ENCODE measurements at regions of chr10 and their contacts with region 1.

Region 1: DNA sequence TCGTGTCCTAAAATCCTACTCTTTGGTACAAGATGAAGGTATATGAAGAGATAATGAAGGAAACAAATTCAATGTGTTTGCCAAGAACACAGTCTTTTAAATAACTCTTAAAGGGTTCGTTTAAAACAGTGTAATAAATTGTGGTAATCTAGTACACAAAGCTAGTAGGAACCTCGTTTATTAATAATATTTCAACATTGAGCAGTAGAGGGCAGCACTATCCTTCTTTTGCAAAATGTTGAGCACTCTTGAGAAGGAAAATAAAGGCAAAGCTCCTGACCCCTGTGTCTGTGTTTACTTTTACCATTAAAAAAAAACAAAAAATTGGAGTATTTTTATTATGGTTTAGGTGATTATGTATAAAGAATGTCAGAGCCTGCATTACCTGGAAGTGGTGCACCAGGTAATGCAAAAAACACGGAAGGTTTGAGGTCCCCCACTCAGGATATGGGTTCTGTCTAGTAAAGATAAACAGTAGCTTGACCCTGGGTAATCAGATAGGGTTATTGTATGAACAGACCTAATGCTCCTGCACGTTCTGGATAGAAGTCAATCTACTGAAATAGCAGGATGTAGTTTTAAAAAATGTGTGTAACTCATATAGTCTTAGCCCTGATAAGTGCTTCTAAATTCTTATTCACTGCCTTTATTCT is 5.7 kb upstream of the GOT1 start:
- DNase-seq: peak in 1 of 2 experiments; percentile 51
- ATAC-seq: peak; percentile 60 to 80; a peak in 5 of 6 replicates
- H3K4me3 ChIP-seq: no peak overlapping the region
- H3K27ac ChIP-seq: no peak overlapping the region
- H3K4me1 ChIP-seq: peaks cover 4% of the 10 kb centered on the region; the same call in 1 of the 3 replicates
- CTCF ChIP-seq: peak; percentile 85
- EP300 ChIP-seq: no peak
- POLR2A ChIP-seq: no peak
- RAD21 ChIP-seq: peak; percentile 71 to 74

Region 2: GRCh38 chr10:99346247-99346646 is 89.9 kb before region 1 on chr10:
- CTCF ChIA-PET with region 1: no interaction called
- POLR2A ChIA-PET with region 1: no interaction called
- DNase-seq: peak in 1 of 2 experiments; percentile 53
- ATAC-seq: 0 out of 6 replicates have a peak, but pooled peaks of 1 of the 2 experiments have one; percentile 5
- H3K4me3 ChIP-seq: no peak overlapping the region
- H3K27ac ChIP-seq: peak overlapping the region; percentile 70 to 79
- H3K4me1 ChIP-seq: peaks cover 54% of the 10 kb centered on the region
- CTCF ChIP-seq: no peak
- EP300 ChIP-seq: no peak
- POLR2A ChIP-seq: no peak
- RAD21 ChIP-seq: no peak

Region 3: GRCh38 chr10:99394761-99395386 is 41.2 kb before region 1 on chr10:
- CTCF ChIA-PET with region 1: interaction called, 13 read pairs
- POLR2A ChIA-PET with region 1: no interaction called
- DNase-seq: no peak
- ATAC-seq: no peak
- H3K4me3 ChIP-seq: no peak overlapping the region
- H3K27ac ChIP-seq: no peak overlapping the region
- H3K4me1 ChIP-seq: peaks cover 5% of the 10 kb centered on the region; the same call in 1 of the 3 replicates
- CTCF ChIP-seq: no peak
- EP300 ChIP-seq: no peak
- POLR2A ChIP-seq: no peak
- RAD21 ChIP-seq: no peak

Region 4: DNA sequence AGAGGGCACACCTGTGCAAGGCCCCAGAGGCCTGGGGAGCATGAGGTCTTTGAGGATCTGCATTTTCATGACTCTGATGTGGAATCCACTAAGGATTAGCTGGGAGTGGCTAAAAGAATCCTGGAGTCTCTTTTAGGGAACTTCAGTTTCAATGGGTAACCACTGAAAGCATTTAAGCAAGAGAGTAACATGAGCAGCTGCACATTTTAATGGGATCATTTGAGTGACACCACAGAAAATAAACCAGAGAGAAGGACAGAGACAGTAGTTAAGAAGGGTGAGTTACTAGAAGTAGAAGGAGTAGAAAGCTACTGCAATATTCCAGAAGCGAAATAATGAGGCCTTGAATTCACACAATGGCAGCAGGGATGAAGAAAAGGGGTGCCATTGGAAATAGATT is 10.9 kb before region 1 on chr10:
- CTCF ChIA-PET with region 1: interaction called, 17 read pairs
- POLR2A ChIA-PET with region 1: interaction called, 4 read pairs
- DNase-seq: no peak
- ATAC-seq: no peak
- H3K4me3 ChIP-seq: no peak overlapping the region
- H3K27ac ChIP-seq: no peak overlapping the region
- H3K4me1 ChIP-seq: peaks cover 14% of the 10 kb centered on the region; the same call in 2 of the 3 replicates
- CTCF ChIP-seq: no peak
- EP300 ChIP-seq: no peak
- POLR2A ChIP-seq: no peak
- RAD21 ChIP-seq: no peak

Region 5: GRCh38 chr10:99450624-99451498 is 14.7 kb after region 1 on chr10:
- CTCF ChIA-PET with region 1: interaction called, 37 read pairs
- POLR2A ChIA-PET with region 1: no interaction called
- DNase-seq: no peak
- ATAC-seq: no peak; a peak in 1 of 6 replicates
- H3K4me3 ChIP-seq: no peak overlapping the region
- H3K27ac ChIP-seq: no peak overlapping the region
- H3K4me1 ChIP-seq: no peaks in the 10 kb centered on the region
- CTCF ChIP-seq: no peak
- EP300 ChIP-seq: no peak
- POLR2A ChIP-seq: no peak
- RAD21 ChIP-seq: no peak

Region 6: DNA sequence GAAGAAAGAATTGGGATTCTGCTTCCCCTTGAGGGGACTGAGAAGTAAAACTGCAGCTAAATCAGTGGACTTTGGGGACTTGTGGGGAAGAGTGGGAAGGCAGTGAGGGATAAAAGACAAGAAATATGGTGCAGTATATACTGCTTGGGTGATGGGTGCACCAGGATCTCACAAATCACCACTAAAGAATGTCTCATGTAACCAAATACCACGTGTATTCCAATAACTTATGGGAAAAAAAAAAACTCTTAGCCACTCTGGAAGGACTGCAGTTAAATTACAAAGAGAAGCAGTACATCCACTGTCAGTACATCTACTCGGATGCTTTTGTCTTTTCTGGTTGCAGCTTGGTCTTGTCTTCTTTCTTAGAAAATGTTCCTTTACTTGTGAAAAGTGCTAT is 21.7 kb after region 1 on chr10:
- CTCF ChIA-PET with region 1: interaction called, 11 read pairs
- POLR2A ChIA-PET with region 1: no interaction called
- DNase-seq: no peak
- ATAC-seq: peak in 1 of 2 experiments; percentile 21; a peak in 1 of 6 replicates
- H3K4me3 ChIP-seq: no peak overlapping the region
- H3K27ac ChIP-seq: no peak overlapping the region
- H3K4me1 ChIP-seq: no peaks in the 10 kb centered on the region
- CTCF ChIP-seq: no peak
- EP300 ChIP-seq: no peak
- POLR2A ChIP-seq: no peak
- RAD21 ChIP-seq: no peak

Region 7: DNA sequence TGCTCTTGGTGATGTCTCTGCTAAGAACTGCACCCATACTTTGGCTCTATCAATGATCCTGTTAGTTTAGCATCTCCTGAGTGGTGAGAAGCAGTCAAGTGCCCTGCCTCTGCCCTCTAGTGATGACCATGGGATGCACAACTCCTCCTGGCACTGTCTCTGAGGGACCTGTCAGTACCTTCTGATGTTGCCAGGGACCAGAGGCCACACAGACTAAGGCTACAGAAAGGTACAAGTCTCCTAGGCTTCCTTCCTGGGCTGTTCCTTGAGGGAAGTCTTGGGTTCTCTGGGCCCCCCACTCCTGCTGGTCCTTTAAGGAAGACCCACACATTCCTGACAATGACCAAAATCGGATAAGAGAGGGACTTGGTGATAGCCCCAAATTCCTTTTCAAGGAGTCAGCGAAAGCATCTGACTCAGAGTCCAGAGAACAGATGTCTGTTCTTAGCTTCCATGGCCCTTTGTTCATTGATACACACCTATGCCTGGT is 112.0 kb after region 1 on chr10:
- CTCF ChIA-PET with region 1: interaction called, 68 read pairs
- POLR2A ChIA-PET with region 1: interaction called, 8 read pairs
- DNase-seq: peak; percentile 65 to 75
- ATAC-seq: peak; percentile 92 to 96
- H3K4me3 ChIP-seq: no peak overlapping the region
- H3K27ac ChIP-seq: no peak overlapping the region
- H3K4me1 ChIP-seq: peaks cover 5% of the 10 kb centered on the region; the same call in 1 of the 3 replicates
- CTCF ChIP-seq: peak; percentile 39
- EP300 ChIP-seq: no peak
- POLR2A ChIP-seq: no peak
- RAD21 ChIP-seq: peak; percentile 45 to 62